AG04449 (cell line): ENCODE measurements at regions of chr6 and their contacts with region 1.

Region 1: DNA sequence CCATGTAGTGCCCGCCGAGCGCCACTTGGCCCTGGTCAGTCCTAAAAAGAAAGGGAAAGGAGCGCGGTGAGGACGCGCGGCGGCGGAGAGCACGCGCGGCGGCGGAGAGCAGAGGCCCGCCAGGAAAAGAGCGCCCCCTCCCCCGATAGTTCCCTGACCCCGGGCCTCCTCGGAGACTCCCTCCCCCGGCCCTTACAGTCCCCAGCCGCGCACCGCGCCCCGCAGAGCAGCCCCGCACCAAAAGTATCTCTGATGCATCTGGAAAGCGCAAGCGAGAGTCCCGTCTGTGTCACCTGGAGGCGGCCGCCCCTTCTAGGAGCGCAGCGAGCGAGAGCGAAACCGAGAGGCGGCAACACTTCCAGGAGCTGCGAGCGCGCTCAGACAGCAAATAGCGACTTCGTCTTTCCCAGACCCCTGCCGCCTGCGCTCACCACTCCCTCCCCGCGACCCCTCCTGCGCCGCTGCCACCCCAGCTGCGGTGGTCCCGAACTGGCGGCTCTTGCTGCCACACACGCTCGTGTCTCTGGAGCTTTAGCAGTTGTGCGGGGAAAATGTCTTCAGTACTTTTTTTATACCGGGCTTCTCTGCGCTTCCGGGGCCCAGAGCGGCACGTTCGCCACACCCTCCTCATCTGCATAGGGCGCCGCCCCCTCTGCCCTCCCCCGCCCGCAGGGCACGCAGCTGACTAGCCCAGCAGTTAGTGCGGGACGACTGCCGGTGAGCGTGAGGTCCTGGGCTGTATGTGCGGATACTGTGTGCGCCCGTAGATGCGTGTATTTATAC is at the start of gene TENT5A:
- DNase-seq: peak; percentile 59
- H3K4me3 ChIP-seq: peak within 1 kb of the TSS; percentile 96
- CTCF ChIP-seq: peak; percentile 12

Region 2: DNA sequence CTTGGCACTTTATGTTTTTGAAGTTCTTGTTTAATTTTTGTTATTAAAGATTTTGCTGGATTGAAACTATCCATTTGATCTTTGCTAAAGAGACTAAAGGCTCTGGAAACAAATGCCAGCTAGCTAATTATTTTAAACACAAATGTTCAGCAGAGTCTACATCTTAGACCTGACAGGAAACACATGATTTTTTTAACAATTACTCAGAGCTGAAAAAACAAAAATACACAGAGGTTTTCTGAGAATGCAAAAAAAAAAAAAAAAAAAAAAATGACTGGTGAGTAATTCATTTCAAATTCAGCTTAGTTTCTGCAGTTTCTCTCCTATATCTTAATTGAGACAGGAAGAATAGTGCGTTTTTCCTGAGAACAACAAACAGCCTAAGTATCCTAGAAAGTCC is 447.9 kb before region 1 on chr6:
- CTCF ChIA-PET with region 1: no interaction called
- POLR2A ChIA-PET with region 1: no interaction called
- DNase-seq: no peak
- H3K4me3 ChIP-seq: no peak overlapping the region
- CTCF ChIP-seq: no peak

Region 3: DNA sequence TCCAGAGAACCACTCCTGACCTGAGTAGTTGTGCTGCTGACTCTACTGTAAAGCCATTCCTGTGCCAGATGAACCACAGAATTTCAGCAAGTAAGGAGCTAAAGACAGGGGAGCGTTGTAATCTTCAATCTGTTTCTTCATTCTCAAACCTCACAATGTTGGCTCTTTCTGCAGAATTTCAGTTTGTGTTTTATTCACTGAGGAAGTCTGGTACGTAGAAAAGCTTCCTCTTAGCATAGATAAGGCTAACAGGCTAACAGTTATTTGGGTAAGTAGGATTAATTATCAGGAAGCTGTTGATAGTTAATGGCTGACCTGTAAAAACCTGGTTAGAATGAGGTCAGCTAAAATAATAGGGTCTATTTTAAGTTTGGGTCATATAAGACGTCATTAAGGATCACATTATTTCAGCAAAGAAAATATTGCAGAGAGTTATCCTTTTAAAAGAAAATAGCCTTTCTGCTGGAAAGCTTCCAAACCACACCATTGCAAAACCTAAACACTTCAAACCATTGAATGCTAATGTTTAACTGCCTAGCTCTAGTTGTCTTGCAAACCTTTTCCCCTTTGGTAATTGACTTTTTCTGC is 14.2 kb after region 1 on chr6:
- CTCF ChIA-PET with region 1: interaction called, 16 read pairs
- POLR2A ChIA-PET with region 1: interaction called, 22 read pairs
- DNase-seq: peak; percentile 81
- H3K4me3 ChIP-seq: no peak overlapping the region
- CTCF ChIP-seq: no peak

Region 4: DNA sequence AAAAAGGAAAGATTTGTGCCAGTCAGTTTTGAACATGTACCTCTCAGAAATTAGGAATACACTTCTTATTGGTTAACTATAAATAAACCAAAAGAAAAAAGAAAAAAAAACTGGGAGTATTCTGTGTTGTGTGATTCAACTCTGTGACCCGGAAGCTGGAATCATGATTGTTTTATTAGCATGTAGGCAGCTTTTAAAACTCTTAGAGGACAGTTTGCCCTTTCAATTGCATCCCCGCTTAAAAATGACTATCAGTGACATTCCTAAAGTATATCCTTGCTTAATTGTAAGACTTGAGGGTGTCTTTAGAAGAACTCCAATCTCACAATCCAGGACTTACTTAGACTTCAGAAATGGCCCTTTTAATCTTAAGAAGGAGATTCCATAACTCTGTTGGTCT is 29.3 kb after region 1 on chr6:
- CTCF ChIA-PET with region 1: no interaction called
- POLR2A ChIA-PET with region 1: no interaction called
- DNase-seq: no peak
- H3K4me3 ChIP-seq: no peak overlapping the region
- CTCF ChIP-seq: no peak

Region 5: GRCh38 chr6:81854474-81854873 is 102.1 kb after region 1 on chr6:
- CTCF ChIA-PET with region 1: no interaction called
- POLR2A ChIA-PET with region 1: no interaction called
- DNase-seq: no peak
- H3K4me3 ChIP-seq: no peak overlapping the region
- CTCF ChIP-seq: no peak

Region 6: DNA sequence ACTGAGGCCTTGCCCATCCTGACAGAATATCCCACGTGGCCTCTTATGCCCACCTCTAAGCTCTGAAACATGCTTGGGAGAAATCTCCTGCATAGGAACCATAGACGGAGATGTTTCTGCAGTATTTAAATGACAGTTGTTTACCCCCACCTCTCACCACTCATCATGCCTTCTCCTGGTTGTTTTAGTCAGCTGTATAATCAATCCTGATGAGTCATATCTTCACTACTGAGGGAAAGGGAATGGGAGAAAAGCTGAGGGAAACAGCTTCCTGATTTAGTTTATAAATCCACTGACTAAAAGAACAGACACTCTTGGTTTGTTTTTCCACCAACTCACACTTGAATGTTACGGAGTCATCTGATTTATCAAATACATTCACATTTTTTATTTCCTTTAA is 113.4 kb after region 1 on chr6:
- CTCF ChIA-PET with region 1: no interaction called
- POLR2A ChIA-PET with region 1: no interaction called
- DNase-seq: peak; percentile 47
- H3K4me3 ChIP-seq: no peak overlapping the region
- CTCF ChIP-seq: no peak

Region 7: DNA sequence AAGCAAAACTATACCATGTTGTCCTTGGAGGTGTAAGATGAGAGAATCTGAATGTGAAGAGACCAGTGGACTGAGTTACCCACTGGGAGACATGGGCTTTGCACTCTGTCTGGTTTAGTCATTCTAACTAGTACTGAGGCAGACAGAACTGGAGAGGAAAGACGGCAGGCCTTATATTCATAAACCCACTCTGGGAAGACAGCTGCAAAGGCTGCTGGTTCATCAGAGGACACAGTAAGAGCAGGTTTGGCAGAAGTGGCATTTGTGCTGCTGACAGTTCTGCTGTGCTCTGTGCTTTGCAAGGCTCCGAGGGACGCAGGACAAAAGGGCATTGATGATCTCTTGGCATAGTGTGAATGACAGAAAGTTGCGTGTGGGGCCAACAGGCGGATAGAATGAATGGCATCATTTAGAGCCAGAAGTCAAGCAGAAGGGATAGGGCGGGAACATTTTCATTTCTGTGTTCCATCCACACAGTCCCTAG is 142.5 kb after region 1 on chr6:
- CTCF ChIA-PET with region 1: interaction called, 7 read pairs
- POLR2A ChIA-PET with region 1: interaction called, 28 read pairs
- DNase-seq: no peak
- H3K4me3 ChIP-seq: no peak overlapping the region
- CTCF ChIP-seq: no peak

Region 8: DNA sequence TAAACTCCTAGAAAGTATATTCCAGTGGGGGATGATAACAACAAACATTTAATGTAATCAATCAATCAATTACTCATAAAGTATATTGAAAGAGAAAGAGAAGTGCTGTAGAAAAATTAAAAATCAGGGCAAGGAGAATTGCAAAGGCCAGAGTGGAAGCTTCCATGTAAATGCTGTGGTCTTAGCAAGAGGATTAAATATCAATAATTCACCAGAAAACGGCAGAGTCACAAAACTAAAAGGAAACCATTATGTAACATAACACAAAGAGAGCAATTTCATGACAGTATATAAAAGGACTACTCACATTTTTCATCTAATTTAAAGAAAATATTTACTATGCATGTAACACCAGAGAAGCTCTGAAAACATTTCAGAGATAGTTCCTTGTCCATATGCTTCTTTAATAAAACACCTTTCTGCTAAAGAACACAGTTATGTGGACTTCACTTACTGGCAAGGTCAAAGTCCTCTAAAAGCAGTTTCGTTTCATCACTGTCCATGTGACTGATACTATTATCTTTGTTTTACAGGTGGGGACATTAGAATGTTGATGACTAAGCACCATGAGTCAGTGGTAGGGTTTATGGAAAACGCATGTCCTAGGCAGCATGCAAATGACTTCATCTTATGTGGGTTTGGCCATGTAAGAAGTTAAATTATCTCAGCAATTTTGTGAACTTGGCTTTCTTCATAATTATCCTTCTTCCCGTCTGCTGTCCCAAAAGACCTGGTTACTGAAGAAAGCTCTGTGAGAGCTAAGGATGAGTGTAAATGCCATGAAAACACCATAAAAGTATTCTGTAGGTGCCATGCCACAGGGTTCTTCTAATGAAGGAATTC is 185.9 kb after region 1 on chr6:
- CTCF ChIA-PET with region 1: interaction called, 3 read pairs
- POLR2A ChIA-PET with region 1: interaction called, 17 read pairs
- DNase-seq: peak; percentile 64
- H3K4me3 ChIP-seq: no peak overlapping the region
- CTCF ChIP-seq: no peak

Region 9: DNA sequence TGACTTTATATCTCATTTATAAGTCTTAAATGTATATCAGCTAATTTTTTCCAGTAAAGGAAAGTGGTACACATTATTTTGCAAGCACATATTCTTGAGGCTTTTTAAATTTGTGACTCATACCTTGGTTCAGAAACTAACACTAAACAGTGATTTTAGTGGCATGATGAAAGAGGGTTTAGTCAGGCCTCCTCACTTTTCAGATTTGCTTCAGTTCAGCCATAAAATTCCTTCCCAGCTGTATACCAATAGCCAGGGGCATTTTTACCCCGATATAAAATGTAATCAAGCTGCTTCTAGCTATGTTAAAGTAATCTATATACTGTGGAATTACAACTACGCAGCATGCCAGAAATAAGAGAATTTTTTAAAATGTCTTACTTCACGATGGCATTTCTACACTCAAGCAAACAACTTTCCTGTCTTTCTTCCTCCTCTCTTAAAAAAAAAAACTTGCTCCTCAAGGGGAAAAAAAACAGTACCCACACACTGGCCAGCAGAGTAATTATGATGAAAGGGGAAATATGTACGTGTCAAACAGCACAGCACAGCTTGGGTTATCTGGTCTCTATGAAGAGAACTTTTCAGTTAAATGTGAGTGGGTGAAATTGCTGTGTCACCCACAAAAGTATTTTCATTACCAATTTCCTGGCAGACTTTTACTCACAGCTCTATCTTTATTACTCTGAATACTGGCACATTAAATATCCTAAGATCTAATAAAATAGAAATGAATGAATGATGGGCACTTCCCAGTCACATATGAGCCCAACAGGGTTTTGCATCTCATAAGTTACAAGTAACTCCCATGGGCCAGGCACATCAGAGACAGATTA is 245.0 kb after region 1 on chr6:
- CTCF ChIA-PET with region 1: interaction called, 8 read pairs
- POLR2A ChIA-PET with region 1: interaction called, 32 read pairs
- DNase-seq: peak; percentile 79
- H3K4me3 ChIP-seq: no peak overlapping the region
- CTCF ChIP-seq: no peak

Region 10: GRCh38 chr6:82006027-82006738 is 253.9 kb after region 1 on chr6:
- CTCF ChIA-PET with region 1: interaction called, 16 read pairs
- POLR2A ChIA-PET with region 1: interaction called, 32 read pairs
- DNase-seq: no peak
- H3K4me3 ChIP-seq: no peak overlapping the region
- CTCF ChIP-seq: peak; percentile 39

Region 11: DNA sequence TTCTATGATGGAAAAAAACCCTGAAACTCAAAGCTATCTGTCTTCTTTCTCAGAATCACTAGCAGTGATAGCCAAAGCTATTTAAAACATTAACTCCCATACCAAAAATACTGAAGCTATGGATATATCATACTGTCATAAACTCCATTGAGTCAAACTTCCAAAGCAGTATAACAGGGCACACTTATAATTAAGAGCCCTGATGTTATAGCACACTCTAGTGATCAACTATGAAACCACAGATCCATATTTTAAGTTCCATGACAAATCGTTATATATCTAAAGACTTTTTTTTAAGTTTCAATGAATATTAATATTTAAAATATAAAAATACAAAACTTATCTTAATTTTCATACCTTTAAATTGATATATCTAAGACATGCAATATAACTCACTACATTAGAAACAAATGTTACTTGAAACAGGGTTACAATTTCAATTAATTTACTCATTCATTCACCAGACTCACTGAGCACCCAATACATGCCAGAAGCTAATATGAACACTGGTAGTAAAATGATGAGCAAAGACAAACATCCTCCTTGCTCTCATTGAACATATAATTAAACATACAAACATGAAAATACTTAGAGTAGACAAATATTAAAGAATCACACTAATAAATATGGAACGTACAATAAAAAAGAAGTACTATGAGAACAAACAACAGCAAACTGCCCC is 425.9 kb after region 1 on chr6:
- CTCF ChIA-PET with region 1: interaction called, 20 read pairs
- POLR2A ChIA-PET with region 1: interaction called, 6 read pairs
- DNase-seq: peak; percentile 23
- H3K4me3 ChIP-seq: no peak overlapping the region
- CTCF ChIP-seq: peak; percentile 33